ENCODE measurements at regions of chr5 and their contacts with region 1.

Region 1: GRCh38 chr5:111158105-111158744 is 66.0 kb upstream of the CAMK4 start:
- DNase-seq: peak; percentile 46 to 79 (median 70)
- ATAC-seq: peak; percentile 91
- H3K4me3 ChIP-seq: no peak overlapping the region
- H3K4me3 Mint-ChIP-seq: no peak overlapping the region
- H3K27ac ChIP-seq: no peak overlapping the region
- H3K27ac Mint-ChIP-seq: no peak overlapping the region
- H3K4me1 ChIP-seq: no peaks in the 10 kb centered on the region
- H3K4me1 Mint-ChIP-seq: peaks cover 0 to 10% (median 0%) of the 10 kb centered on the region in 7 donors
- H3K27me3 ChIP-seq: no peaks in the 10 kb centered on the region
- H3K27me3 Mint-ChIP-seq: peaks cover 0 to 8% (median 0%) of the 10 kb centered on the region in 5 donors

Region 2: GRCh38 chr5:111072949-111073682 is 85.1 kb before region 1 on chr5:
- CTCF ChIA-PET with region 1: no interaction called
- POLR2A ChIA-PET with region 1: no interaction called
- intact Hi-C with region 1: no loop called
- DNase-seq: peak; percentile 10 to 69 (median 37)
- ATAC-seq: peak; percentile 86
- H3K4me3 ChIP-seq: peak overlapping the region; percentile 67
- H3K4me3 Mint-ChIP-seq: peak overlapping the region; percentile 84 to 95 (median 90)
- H3K27ac ChIP-seq: no peak overlapping the region
- H3K27ac Mint-ChIP-seq: peak overlapping the region in 3 of 9 donors; percentile 4 to 55 (median 53)
- H3K4me1 ChIP-seq: peaks cover 4 to 15% of the 10 kb centered on the region in 2 donors
- H3K4me1 Mint-ChIP-seq: peaks cover 11 to 39% (median 30%) of the 10 kb centered on the region in 7 donors
- H3K27me3 ChIP-seq: peaks cover 14% of the 10 kb centered on the region in 2 donors
- H3K27me3 Mint-ChIP-seq: peaks cover 68 to 82% (median 77%) of the 10 kb centered on the region in 5 donors

Region 3: GRCh38 chr5:111254613-111255012 is 96.4 kb after region 1 on chr5:
- CTCF ChIA-PET with region 1: no interaction called
- POLR2A ChIA-PET with region 1: no interaction called
- intact Hi-C with region 1: no loop called
- DNase-seq: peak in 6 of 9 donors; percentile 36 to 90 (median 52)
- ATAC-seq: peak; percentile 93
- H3K4me3 ChIP-seq: no peak overlapping the region
- H3K4me3 Mint-ChIP-seq: peak overlapping the region; percentile 46 to 80 (median 70)
- H3K27ac ChIP-seq: peak overlapping the region; percentile 76
- H3K27ac Mint-ChIP-seq: peak overlapping the region; percentile 65 to 95 (median 85)
- H3K4me1 ChIP-seq: peaks cover 36 to 73% of the 10 kb centered on the region in 2 donors
- H3K4me1 Mint-ChIP-seq: peaks cover 0 to 78% (median 48%) of the 10 kb centered on the region in 7 donors
- H3K27me3 ChIP-seq: no peaks in the 10 kb centered on the region
- H3K27me3 Mint-ChIP-seq: no peaks in the 10 kb centered on the region

Region 4: DNA sequence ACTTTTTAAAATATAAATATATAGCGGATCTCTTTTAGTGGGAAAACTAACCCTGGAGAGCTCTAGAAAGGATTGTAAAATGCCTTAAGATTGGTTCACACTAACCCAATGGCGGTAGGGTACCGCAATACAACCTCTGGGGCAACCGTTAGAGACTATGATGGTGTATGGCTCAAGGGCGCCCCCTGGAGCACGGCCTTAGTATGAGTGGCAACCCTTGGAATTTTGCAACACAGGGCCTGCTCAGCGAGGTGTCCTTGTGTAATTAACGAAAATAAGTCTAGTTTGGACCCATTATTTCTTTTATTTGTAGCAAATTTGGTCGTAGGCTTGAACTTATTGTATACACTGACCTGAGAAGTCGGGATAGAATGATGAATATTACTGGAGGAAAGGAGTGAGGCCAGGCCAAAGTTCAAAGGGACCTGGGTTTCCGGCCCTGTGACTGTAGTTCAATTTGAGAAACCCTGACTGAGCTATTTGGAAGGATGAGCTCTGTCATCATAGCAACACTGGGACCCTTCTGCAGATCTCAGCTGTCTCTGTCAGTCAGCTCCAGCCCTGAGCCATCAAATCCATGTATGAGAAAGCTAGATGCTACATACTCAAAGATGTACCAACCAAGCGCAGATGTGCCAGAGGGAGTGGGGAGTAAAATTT is 120.8 kb after region 1 on chr5:
- CTCF ChIA-PET with region 1: interaction called, 131 read pairs
- POLR2A ChIA-PET with region 1: interaction called, 9 read pairs
- intact Hi-C with region 1: loop called (anchors 1 kb)
- DNase-seq: peak; percentile 75 to 89 (median 82)
- ATAC-seq: peak; percentile 99
- H3K4me3 ChIP-seq: no peak overlapping the region
- H3K4me3 Mint-ChIP-seq: peak overlapping the region; percentile 2 to 83 (median 64)
- H3K27ac ChIP-seq: no peak overlapping the region
- H3K27ac Mint-ChIP-seq: peak overlapping the region in 7 of 9 donors; percentile 8 to 94 (median 77)
- H3K4me1 ChIP-seq: peaks cover 7 to 13% of the 10 kb centered on the region in 2 donors
- H3K4me1 Mint-ChIP-seq: peaks cover 29 to 94% (median 90%) of the 10 kb centered on the region in 7 donors
- H3K27me3 ChIP-seq: no peaks in the 10 kb centered on the region
- H3K27me3 Mint-ChIP-seq: no peaks in the 10 kb centered on the region

Region 5: DNA sequence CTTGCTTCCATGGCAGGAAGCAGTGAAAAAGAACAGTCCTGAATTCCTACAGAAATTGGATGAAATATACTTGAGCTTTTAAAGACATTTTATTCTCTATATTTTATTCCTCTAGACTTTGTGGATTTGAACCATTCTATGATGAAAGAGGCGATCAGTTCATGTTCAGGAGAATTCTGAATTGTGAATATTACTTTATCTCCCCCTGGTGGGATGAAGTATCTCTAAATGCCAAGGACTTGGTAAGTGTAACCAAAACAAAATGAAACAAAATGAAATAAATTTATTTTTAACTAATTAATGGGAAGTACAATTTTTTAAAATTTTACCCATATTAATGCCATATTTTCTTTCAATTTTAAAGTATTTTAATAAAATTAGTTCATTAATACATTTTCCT is 320.0 kb after region 1 on chr5:
- CTCF ChIA-PET with region 1: no interaction called
- POLR2A ChIA-PET with region 1: no interaction called
- intact Hi-C with region 1: loop called (anchors 1 to 2 kb)
- DNase-seq: no peak
- ATAC-seq: no peak
- H3K4me3 ChIP-seq: no peak overlapping the region
- H3K4me3 Mint-ChIP-seq: no peak overlapping the region
- H3K27ac ChIP-seq: no peak overlapping the region
- H3K27ac Mint-ChIP-seq: no peak overlapping the region
- H3K4me1 ChIP-seq: no peaks in the 10 kb centered on the region
- H3K4me1 Mint-ChIP-seq: peaks cover 0 to 5% (median 2%) of the 10 kb centered on the region in 7 donors
- H3K27me3 ChIP-seq: no peaks in the 10 kb centered on the region
- H3K27me3 Mint-ChIP-seq: no peaks in the 10 kb centered on the region

Region 6: DNA sequence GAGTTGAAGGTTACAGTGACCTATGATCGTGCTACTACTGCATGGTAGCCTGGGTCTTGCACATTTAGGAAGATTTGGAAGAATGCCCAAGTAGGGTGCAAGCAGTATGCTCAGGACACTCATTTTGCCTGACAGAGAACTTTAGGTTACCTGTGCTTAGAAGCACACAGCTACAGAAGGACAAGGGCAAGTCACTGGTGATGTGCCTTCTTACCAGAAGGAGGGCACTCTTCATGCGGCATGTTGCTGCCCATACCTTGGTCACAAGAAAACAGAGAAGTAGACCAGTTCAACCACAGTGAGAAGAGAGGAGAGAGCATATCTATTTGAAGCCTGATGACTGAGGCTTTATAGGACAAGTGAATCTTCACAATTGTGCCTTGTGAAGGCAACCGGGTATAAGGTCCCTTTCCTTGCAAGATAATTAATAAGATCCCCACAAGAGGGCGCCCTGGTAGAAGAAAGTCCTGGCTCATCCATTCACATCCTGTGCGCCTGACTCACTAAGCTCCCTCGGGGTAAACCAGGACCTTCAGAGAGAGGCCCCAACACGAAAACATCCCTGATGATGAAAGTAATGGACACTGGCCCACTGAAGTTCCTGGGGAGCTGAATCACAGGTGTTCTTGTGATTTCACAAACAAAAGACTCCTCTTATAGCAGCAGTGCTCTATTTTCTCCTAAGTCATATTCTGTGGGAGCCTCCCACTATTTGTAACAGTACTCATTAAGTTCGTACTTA is 392.2 kb after region 1 on chr5:
- CTCF ChIA-PET with region 1: no interaction called
- POLR2A ChIA-PET with region 1: no interaction called
- intact Hi-C with region 1: loop called in 1 of 2 experiments (anchors 1 kb)
- DNase-seq: peak; percentile 35 to 79 (median 68)
- ATAC-seq: peak; percentile 93
- H3K4me3 ChIP-seq: no peak overlapping the region
- H3K4me3 Mint-ChIP-seq: peak overlapping the region in 1 of 10 donors; percentile 19
- H3K27ac ChIP-seq: no peak overlapping the region
- H3K27ac Mint-ChIP-seq: peak overlapping the region in 2 of 9 donors; percentile 36 to 47
- H3K4me1 ChIP-seq: peaks cover 0 to 12% of the 10 kb centered on the region in 2 donors
- H3K4me1 Mint-ChIP-seq: peaks cover 8 to 22% (median 20%) of the 10 kb centered on the region in 7 donors
- H3K27me3 ChIP-seq: no peaks in the 10 kb centered on the region
- H3K27me3 Mint-ChIP-seq: peaks cover 0 to 4% (median 2%) of the 10 kb centered on the region in 5 donors

Measured in naive thymus-derived CD4-positive, alpha-beta T cell (primary cell).